ENCODE measurements at regions of chr4 and their contacts with region 1.

Region 1: DNA sequence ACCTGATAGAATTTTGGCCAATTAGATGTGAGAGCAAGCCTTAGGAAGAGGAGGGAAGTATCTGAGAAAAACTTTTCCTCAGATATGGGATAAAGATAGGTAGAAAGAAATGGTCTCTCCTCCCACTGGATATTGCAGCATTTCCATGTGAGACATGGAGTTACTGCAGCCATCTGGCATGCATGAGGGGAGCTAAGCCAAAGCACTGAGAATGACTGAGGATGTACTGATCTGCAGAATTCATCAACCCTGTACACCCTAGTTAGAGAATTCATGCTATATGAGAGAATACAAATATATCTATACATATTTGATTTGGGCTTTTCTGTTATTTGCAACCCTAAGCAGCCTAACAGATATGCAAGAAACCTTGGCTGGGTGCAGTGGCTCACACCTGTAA is 52.5 kb upstream of the RPL34 start:
- DNase-seq: no peak
- H3K4me3 ChIP-seq: no peak overlapping the region
- CTCF ChIP-seq: no peak
- POLR2A ChIP-seq: no peak

Region 2: GRCh38 chr4:108018040-108018883 is 549.6 kb before region 1 on chr4:
- intact Hi-C with region 1: loop called (anchors 5 kb)
- DNase-seq: peak; percentile 81 to 95
- H3K4me3 ChIP-seq: no peak overlapping the region
- CTCF ChIP-seq: no peak
- POLR2A ChIP-seq: no peak

Region 3: DNA sequence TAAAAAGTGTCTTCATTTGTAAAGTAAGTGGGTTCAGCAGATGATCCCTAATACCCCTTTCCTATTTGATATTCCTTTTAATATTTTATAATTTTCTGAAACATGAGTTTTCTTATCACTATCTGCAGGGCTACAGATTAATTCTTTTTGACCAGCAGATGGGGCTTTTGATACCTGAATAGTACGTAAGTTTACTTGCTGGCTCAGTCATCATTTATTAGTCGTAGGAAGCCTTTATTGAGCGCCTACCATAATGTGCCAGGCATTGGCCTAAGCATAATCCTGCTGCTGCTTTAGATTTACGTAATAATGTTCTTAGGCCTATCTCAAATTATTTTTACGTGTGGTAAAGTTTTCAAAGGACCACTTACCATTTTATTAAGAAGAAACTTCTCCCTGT is 115.6 kb after region 1 on chr4:
- intact Hi-C with region 1: no loop called
- DNase-seq: no peak
- H3K4me3 ChIP-seq: no peak overlapping the region
- CTCF ChIP-seq: no peak
- POLR2A ChIP-seq: no peak

Measured in lower leg skin (tissue), 4 donors.